ENCODE measurements at regions of chr1 and their contacts with region 1.

Region 1: GRCh38 chr1:234499119-234499942 is 20.4 kb upstream of the TARBP1 start:
- DNase-seq: peak; percentile 92 to 93
- ATAC-seq: peak; percentile 95 to 98 (median 97)
- H3K4me3 ChIP-seq: peak overlapping the region in 6 of 10 donors; percentile 3 to 21 (median 12)
- H3K27ac ChIP-seq: peak overlapping the region; percentile 61 to 88 (median 84)
- H3K4me1 ChIP-seq: peaks cover 4 to 48% (median 30%) of the 10 kb centered on the region in 9 donors
- H3K27me3 ChIP-seq: no peaks in the 10 kb centered on the region
- CTCF ChIP-seq: peak; percentile 92 to 99 (median 96)

Region 2: GRCh38 chr1:234589854-234590620 is 90.7 kb after region 1 on chr1:
- intact Hi-C with region 1: loop called in 3 of 10 experiments (anchors 5 to 10 kb)
- DNase-seq: peak in 1 of 2 donors; percentile 39
- ATAC-seq: peak; percentile 40 to 83 (median 66)
- H3K4me3 ChIP-seq: no peak overlapping the region
- H3K27ac ChIP-seq: peak overlapping the region in 8 of 10 donors; percentile 31 to 74 (median 64)
- H3K4me1 ChIP-seq: peaks cover 4 to 44% (median 16%) of the 10 kb centered on the region in 9 donors
- H3K27me3 ChIP-seq: no peaks in the 10 kb centered on the region
- CTCF ChIP-seq: no peak

Region 3: GRCh38 chr1:234610348-234611152 is 111.2 kb after region 1 on chr1:
- intact Hi-C with region 1: loop called in 4 of 10 experiments (anchors 2 to 5 kb)
- DNase-seq: peak; percentile 95 to 97
- ATAC-seq: peak; percentile 55 to 86 (median 80)
- H3K4me3 ChIP-seq: peak overlapping the region; percentile 27 to 70 (median 58)
- H3K27ac ChIP-seq: peak overlapping the region; percentile 95 to 100 (median 99)
- H3K4me1 ChIP-seq: peaks cover 12 to 46% (median 41%) of the 10 kb centered on the region in 9 donors
- H3K27me3 ChIP-seq: no peaks in the 10 kb centered on the region
- CTCF ChIP-seq: peak in 3 of 9 donors; percentile 2 to 12 (median 4)

Region 4: GRCh38 chr1:234716908-234717375 is 217.6 kb after region 1 on chr1:
- intact Hi-C with region 1: loop called in 6 of 10 experiments (anchors 2 to 10 kb)
- DNase-seq: no peak
- ATAC-seq: no peak
- H3K4me3 ChIP-seq: no peak overlapping the region
- H3K27ac ChIP-seq: peak overlapping the region in 9 of 10 donors; percentile 28 to 100 (median 91)
- H3K4me1 ChIP-seq: peaks cover 19 to 68% (median 65%) of the 10 kb centered on the region in 9 donors
- H3K27me3 ChIP-seq: no peaks in the 10 kb centered on the region
- CTCF ChIP-seq: no peak

Region 5: GRCh38 chr1:234978397-234979295 is 479.3 kb after region 1 on chr1:
- intact Hi-C with region 1: loop called in 2 of 10 experiments (anchors 5 to 10 kb)
- DNase-seq: no peak
- ATAC-seq: peak in 7 of 8 donors; percentile 28 to 52 (median 39)
- H3K4me3 ChIP-seq: peak overlapping the region in 2 of 10 donors; percentile 9 to 47
- H3K27ac ChIP-seq: peak overlapping the region; percentile 83 to 98 (median 88)
- H3K4me1 ChIP-seq: peaks cover 15 to 93% (median 54%) of the 10 kb centered on the region in 9 donors
- H3K27me3 ChIP-seq: no peaks in the 10 kb centered on the region
- CTCF ChIP-seq: peak in 3 of 9 donors; percentile 27 to 40 (median 28)

Region 6: GRCh38 chr1:235087896-235088295 is 588.6 kb after region 1 on chr1:
- intact Hi-C with region 1: loop called in 8 of 10 experiments (anchors 1 to 5 kb)
- DNase-seq: no peak
- ATAC-seq: no peak
- H3K4me3 ChIP-seq: no peak overlapping the region
- H3K27ac ChIP-seq: no peak overlapping the region
- H3K4me1 ChIP-seq: peaks cover 6 to 18% (median 16%) of the 10 kb centered on the region in 9 donors
- H3K27me3 ChIP-seq: no peaks in the 10 kb centered on the region
- CTCF ChIP-seq: no peak

Measured in heart right ventricle (tissue), 16 donors.